Activated naive CD8-positive, alpha-beta T cell treated with anti-CD3 and anti-CD28 coated beads, Interleukin-2, amount 10 ng/mL, durations not matched to agents 7 days and 5 days (primary cell): ENCODE measurements at regions of chr3 and their contacts with region 1.

Region 1: GRCh38 chr3:128804017-128804810 is 75.2 kb upstream of the ACAD9 start:
- DNase-seq: no peak
- ATAC-seq: peak; percentile 97
- H3K4me3 Mint-ChIP-seq: peak overlapping the region; percentile 72
- H3K27ac Mint-ChIP-seq: peak overlapping the region; percentile 88
- H3K4me1 Mint-ChIP-seq: peaks cover 62% of the 10 kb centered on the region
- H3K27me3 Mint-ChIP-seq: no peaks in the 10 kb centered on the region

Region 2: GRCh38 chr3:128787256-128788240 is 16.7 kb before region 1 on chr3:
- POLR2A ChIA-PET with region 1: interaction called, 19 read pairs
- DNase-seq: no peak
- ATAC-seq: peak; percentile 57
- H3K4me3 Mint-ChIP-seq: peak overlapping the region; percentile 92
- H3K27ac Mint-ChIP-seq: peak overlapping the region; percentile 99
- H3K4me1 Mint-ChIP-seq: peaks cover 68% of the 10 kb centered on the region
- H3K27me3 Mint-ChIP-seq: no peaks in the 10 kb centered on the region